AG04449 (cell line): ENCODE measurements at regions of chr1 and their contacts with region 1.

Region 1: GRCh38 chr1:66490816-66491215 is 43.1 kb upstream of the SGIP1 start:
- DNase-seq: no peak
- H3K4me3 ChIP-seq: no peak overlapping the region
- CTCF ChIP-seq: no peak

Region 2: GRCh38 chr1:66374561-66375111 is 116.2 kb before region 1 on chr1:
- CTCF ChIA-PET with region 1: no interaction called
- POLR2A ChIA-PET with region 1: no interaction called
- DNase-seq: peak; percentile 44
- H3K4me3 ChIP-seq: no peak overlapping the region
- CTCF ChIP-seq: no peak

Region 3: GRCh38 chr1:66434096-66434495 is 56.7 kb before region 1 on chr1:
- CTCF ChIA-PET with region 1: no interaction called
- POLR2A ChIA-PET with region 1: no interaction called
- DNase-seq: peak; percentile 34
- H3K4me3 ChIP-seq: no peak overlapping the region
- CTCF ChIP-seq: no peak

Region 4: DNA sequence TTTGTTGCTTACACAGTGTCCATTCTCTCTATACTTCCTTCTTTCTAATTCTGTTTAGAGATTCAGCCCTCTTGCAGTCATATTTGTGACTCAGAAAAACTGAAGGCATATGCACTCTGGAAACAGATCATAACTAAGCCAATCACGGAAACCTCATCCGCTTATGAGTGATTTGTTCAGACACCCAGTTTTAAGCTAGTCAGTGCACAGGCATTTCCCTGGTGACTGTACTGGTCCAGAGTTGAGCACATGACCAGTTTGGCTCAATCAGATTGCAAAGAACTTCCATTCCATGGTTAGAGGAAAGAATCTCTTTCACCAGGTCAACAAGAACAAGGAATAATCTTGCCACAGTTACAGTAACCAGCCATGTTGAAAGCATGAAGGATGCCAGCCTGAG is 26.0 kb before region 1 on chr1:
- CTCF ChIA-PET with region 1: interaction called, 10 read pairs
- POLR2A ChIA-PET with region 1: interaction called, 11 read pairs
- DNase-seq: peak; percentile 98
- H3K4me3 ChIP-seq: no peak overlapping the region
- CTCF ChIP-seq: no peak

Region 5: DNA sequence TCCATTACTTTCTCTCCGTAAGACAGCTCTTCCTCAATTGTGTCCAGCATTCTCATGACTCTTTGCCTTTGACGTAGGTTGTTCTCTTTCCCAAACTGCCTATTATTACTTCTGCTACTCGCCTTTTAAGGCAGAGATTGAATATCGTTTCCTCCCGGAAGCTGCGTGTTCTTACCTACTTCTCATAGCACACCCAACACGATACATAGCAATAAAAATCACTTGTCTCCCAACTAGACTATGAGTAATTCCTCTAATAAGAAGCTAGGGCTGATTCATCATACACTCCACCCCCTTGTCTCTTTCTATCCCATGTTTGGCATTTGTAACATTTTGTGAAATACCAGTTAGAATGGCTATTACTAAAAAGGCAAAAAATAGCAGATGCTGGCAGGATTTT is 12.7 kb before region 1 on chr1:
- CTCF ChIA-PET with region 1: interaction called, 18 read pairs
- POLR2A ChIA-PET with region 1: interaction called, 11 read pairs
- DNase-seq: peak; percentile 92
- H3K4me3 ChIP-seq: no peak overlapping the region
- CTCF ChIP-seq: no peak